H1 (cell line): ENCODE measurements at regions of chr19 and their contacts with region 1.

Region 1: GRCh38 chr19:7852851-7853769 is 21.1 kb downstream of the PRR36 start:
- DNase-seq: peak in 1 of 2 experiments; percentile 97
- H3K4me3 ChIP-seq: peak overlapping the region in 2 of 4 experiments; percentile 19 to 48; a peak in 4 of 8 replicates
- H3K27ac ChIP-seq: no peak overlapping the region
- H3K4me1 ChIP-seq: peaks cover 0 to 14% (median 6%) of the 10 kb centered on the region in 4 experiments; a peak in 5 of 7 replicates
- H3K27me3 ChIP-seq: peaks cover 0 to 2% (median 0%) of the 10 kb centered on the region in 4 experiments; a peak in 1 of 7 replicates
- CTCF ChIP-seq: peak; percentile 84 to 85 (median 85)
- EP300 ChIP-seq: no peak
- POLR2A ChIP-seq: no peak
- RAD21 ChIP-seq: peak; percentile 86 to 89

Region 2: GRCh38 chr19:7868676-7869452 is 15.8 kb after region 1 on chr19:
- CTCF ChIA-PET with region 1: interaction called, 21 read pairs
- POLR2A ChIA-PET with region 1: interaction called, 14 read pairs
- DNase-seq: peak; percentile 82 to 97
- H3K4me3 ChIP-seq: peak overlapping the region; percentile 26 to 61 (median 44)
- H3K27ac ChIP-seq: no peak overlapping the region; the same call in 1 of the 2 replicates
- H3K4me1 ChIP-seq: peaks cover 0 to 26% (median 14%) of the 10 kb centered on the region in 4 experiments; a peak in 5 of 7 replicates
- H3K27me3 ChIP-seq: peaks cover 2 to 33% (median 22%) of the 10 kb centered on the region in 4 experiments
- CTCF ChIP-seq: peak; percentile 80 to 86 (median 81)
- EP300 ChIP-seq: no peak
- POLR2A ChIP-seq: no peak; a peak in 2 of 3 replicates
- RAD21 ChIP-seq: peak in 1 of 2 experiments; percentile 46; a peak in 1 of 4 replicates

Region 3: GRCh38 chr19:7897292-7897691 is 44.2 kb after region 1 on chr19:
- CTCF ChIA-PET with region 1: interaction called, 14 read pairs
- POLR2A ChIA-PET with region 1: interaction called, 6 read pairs
- DNase-seq: no peak
- H3K4me3 ChIP-seq: no peak overlapping the region
- H3K27ac ChIP-seq: no peak overlapping the region
- H3K4me1 ChIP-seq: peaks cover 0 to 4% (median 0%) of the 10 kb centered on the region in 4 experiments; a peak in 2 of 7 replicates
- H3K27me3 ChIP-seq: no peaks in the 10 kb centered on the region
- CTCF ChIP-seq: no peak
- EP300 ChIP-seq: no peak
- POLR2A ChIP-seq: no peak
- RAD21 ChIP-seq: no peak